ENCODE measurements at regions of chr19 and their contacts with region 1.

Region 1: GRCh38 chr19:51016798-51017683 is 2.5 kb downstream of the KLK10 start:
- DNase-seq: peak; percentile 59 to 96 (median 79)

Region 2: DNA sequence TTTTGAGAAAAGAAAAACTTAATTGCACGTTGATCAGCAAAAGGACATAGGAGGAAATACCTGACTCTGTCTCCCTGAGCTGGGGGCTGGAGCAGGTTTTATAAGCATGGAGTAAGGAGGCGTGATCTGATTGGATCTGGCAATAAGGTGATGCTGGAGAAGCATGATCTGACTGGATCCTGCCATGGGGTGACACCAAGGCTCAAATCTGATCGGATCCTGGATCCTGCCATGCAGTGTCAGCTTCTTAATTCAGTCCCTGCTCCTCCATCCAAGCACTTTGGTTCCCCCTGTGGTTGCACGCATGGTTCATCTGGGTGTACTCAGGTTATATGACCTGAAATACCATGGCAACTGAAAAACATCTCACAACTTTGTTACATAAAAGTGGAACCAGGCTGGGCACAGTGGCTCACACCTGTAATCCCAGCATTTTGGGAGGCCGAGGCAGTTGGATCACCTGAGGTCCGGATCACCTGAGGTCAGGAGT is 88.3 kb before region 1 on chr19:
- intact Hi-C with region 1: loop called (anchors 1 kb)
- DNase-seq: peak in 1 of 10 donors; percentile 34

Region 3: GRCh38 chr19:50969411-50969756 is 47.7 kb before region 1 on chr19 and contains the start of gene KLK6:
- intact Hi-C with region 1: loop called (anchors 2 kb)
- DNase-seq: peak; percentile 71 to 98 (median 84)

Region 4: DNA sequence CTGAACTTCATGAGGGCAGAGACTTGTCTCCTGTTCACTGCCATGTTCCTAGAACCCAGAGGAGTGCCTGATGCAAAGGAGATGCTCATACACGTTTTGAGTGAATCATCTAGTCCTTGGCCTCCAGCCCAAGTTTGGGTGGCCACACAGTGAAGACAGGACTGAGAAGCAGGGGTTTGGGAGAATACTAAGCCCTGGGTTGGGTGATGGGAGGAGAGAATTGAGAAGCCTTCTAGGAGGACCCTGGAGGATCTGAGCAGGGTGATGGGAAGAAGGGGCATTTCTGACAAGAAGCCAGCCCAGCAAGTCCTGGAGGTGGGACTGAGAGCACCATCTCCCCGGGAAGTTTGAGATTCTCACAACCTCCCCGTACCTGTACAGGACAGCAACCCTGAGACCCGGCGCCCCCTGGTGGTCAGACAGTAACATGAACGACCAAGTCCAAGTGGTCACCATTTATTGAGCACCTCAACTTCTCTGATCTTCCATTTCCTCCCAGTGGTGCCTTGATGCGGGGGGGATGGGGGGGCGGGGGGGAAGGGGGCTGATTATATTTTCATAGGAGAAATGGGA is 80.2 kb after region 1 on chr19:
- intact Hi-C with region 1: loop called (anchors 1 kb)
- DNase-seq: peak; percentile 35 to 94 (median 72)

Region 5: GRCh38 chr19:51168564-51169282 is 151.7 kb after region 1 on chr19:
- intact Hi-C with region 1: loop called (anchors 1 kb)
- DNase-seq: no peak

Measured in posterior cingulate gyrus (tissue), 11 donors.